Body of pancreas (tissue), 4 donors: ENCODE measurements at regions of chr1 and their contacts with region 1.

Region 1: DNA sequence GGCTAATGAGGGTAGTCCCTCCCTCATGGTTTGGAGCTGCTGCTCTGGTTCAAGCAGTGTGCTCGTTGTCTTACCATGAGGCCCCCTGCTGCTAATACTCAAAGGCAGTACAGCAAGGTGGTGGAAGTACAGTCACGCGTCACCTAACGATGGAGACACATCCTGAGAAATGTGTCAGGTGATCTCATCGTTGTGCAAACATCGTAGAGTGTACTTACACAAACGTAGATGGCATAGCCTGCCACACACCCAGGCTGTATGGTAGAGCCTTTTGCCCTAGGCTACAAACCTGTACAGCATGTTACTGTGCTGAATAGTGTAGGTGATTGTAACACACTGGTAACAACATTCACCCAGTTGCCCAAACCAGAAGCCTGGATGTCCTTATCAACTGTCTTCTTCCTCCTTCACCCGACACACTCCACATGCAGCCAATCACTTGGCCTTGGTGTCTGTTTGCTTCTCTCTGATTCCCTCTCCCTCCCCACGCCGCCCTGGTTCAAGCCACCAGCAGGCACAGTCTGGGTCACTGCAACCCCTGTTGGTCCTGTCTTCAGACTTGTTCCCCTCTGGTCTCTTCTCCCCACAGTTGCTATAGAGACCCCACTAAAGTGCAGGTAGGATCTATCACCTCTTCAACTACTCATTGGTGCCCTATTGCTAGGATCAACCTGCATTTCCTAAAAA is 6.0 kb upstream of the KCNA2 start:
- DNase-seq: peak in 3 of 4 donors; percentile 26 to 45 (median 35)
- ATAC-seq: no peak
- H3K4me3 ChIP-seq: no peak overlapping the region
- H3K27ac ChIP-seq: no peak overlapping the region
- H3K4me1 ChIP-seq: peaks cover 9% of the 10 kb centered on the region
- H3K27me3 ChIP-seq: peaks cover 0 to 12% of the 10 kb centered on the region in 2 donors
- CTCF ChIP-seq: no peak
- POLR2A ChIP-seq: no peak

Region 2: GRCh38 chr1:110554871-110555801 is 57.1 kb before region 1 on chr1:
- intact Hi-C with region 1: loop called (anchors 5 kb)
- DNase-seq: peak; percentile 50 to 65 (median 60)
- ATAC-seq: peak; percentile 79
- H3K4me3 ChIP-seq: no peak overlapping the region
- H3K27ac ChIP-seq: no peak overlapping the region
- H3K4me1 ChIP-seq: peaks cover 8% of the 10 kb centered on the region
- H3K27me3 ChIP-seq: no peaks in the 10 kb centered on the region
- CTCF ChIP-seq: peak; percentile 66 to 79 (median 75)
- POLR2A ChIP-seq: no peak

Region 3: DNA sequence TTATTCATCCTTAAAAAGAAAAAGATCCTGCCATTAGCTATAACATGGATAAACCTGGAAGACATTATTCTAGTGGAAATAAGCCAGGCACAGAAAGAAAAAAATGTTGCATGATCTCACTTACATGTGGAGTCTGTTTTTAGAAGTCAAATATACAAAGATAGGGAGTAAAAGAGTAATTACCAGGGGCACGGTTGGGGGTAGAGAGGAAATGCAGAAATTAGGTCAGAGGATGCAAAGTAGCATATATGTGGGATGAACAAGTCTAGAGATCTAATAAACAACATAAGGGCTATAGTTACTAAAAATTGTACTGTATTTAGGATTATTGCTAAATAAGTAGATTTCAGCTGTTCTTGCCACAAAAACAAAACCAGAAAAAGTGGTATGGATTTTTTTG is 199.3 kb after region 1 on chr1:
- intact Hi-C with region 1: no loop called
- DNase-seq: no peak
- ATAC-seq: no peak
- H3K4me3 ChIP-seq: no peak overlapping the region
- H3K27ac ChIP-seq: no peak overlapping the region
- H3K4me1 ChIP-seq: no peaks in the 10 kb centered on the region
- H3K27me3 ChIP-seq: no peaks in the 10 kb centered on the region
- CTCF ChIP-seq: no peak
- POLR2A ChIP-seq: no peak